Caco-2 (cell line): ENCODE measurements at regions of chr5 and their contacts with region 1.

Region 1: GRCh38 chr5:8864053-8864452 is 681.8 kb downstream of the SEMA5A start:
- DNase-seq: peak in 1 of 2 experiments; percentile 55
- H3K4me3 ChIP-seq: no peak overlapping the region
- H3K4me3 Mint-ChIP-seq: no peak overlapping the region
- H3K27ac Mint-ChIP-seq: no peak overlapping the region
- H3K4me1 ChIP-seq: no peaks in the 10 kb centered on the region
- H3K4me1 Mint-ChIP-seq: no peaks in the 10 kb centered on the region
- H3K27me3 ChIP-seq: no peaks in the 10 kb centered on the region
- H3K27me3 Mint-ChIP-seq: peaks cover 3% of the 10 kb centered on the region
- CTCF ChIP-seq: peak; percentile 65 to 75

Region 2: DNA sequence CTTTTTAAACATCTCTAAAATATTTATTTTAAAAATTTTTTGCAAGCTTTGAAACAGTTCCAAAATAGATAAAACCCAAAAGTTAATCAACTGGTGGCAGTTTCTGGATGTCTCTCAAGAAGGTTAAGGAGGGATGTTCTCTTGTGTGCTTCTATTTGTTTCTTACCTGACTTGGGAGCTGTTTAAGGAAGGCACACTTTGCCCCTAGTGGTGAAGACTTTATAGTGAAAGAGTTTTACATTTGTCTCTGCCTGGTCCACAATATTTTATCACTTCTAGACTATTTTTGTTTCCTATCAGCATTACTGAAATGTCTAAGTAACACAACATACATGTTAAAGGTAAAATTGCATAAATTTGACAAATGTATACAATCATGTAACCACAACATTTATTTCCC is 129.0 kb after region 1 on chr5:
- CTCF ChIA-PET with region 1: no interaction called
- POLR2A ChIA-PET with region 1: no interaction called
- intact Hi-C with region 1: loop called (anchors 1 kb)
- DNase-seq: peak in 1 of 2 experiments; percentile 6
- H3K4me3 ChIP-seq: no peak overlapping the region
- H3K4me3 Mint-ChIP-seq: no peak overlapping the region
- H3K27ac Mint-ChIP-seq: no peak overlapping the region
- H3K4me1 ChIP-seq: no peaks in the 10 kb centered on the region
- H3K4me1 Mint-ChIP-seq: no peaks in the 10 kb centered on the region
- H3K27me3 ChIP-seq: no peaks in the 10 kb centered on the region
- H3K27me3 Mint-ChIP-seq: no peaks in the 10 kb centered on the region
- CTCF ChIP-seq: peak; percentile 41 to 67